ENCODE measurements at regions of chrX and their contacts with region 1.

Region 1: DNA sequence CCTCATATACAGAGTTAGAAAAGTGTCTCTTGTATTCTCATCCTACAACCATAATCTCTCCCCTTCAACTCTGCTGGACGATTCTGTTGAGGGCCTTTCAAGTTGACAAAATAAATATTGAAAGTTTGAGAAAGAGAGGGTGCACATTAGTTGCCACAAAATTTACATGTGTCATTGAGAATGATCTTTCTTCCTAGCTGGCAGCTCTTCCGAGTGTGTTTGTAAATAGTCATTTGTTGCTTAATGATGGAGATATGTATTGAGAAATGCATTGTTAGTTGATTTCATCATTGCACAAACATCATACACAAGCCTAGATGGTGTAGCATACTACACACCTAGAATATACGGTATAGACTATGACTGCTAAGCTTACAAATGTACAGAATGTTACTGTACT is 632.8 kb upstream of the AMOT start:
- DNase-seq: no peak

Region 2: GRCh38 chrX:114221445-114221844 is 748.0 kb after region 1 on chrX:
- intact Hi-C with region 1: loop called in 1 of 2 experiments (anchors 10 kb)
- DNase-seq: no peak

Region 3: DNA sequence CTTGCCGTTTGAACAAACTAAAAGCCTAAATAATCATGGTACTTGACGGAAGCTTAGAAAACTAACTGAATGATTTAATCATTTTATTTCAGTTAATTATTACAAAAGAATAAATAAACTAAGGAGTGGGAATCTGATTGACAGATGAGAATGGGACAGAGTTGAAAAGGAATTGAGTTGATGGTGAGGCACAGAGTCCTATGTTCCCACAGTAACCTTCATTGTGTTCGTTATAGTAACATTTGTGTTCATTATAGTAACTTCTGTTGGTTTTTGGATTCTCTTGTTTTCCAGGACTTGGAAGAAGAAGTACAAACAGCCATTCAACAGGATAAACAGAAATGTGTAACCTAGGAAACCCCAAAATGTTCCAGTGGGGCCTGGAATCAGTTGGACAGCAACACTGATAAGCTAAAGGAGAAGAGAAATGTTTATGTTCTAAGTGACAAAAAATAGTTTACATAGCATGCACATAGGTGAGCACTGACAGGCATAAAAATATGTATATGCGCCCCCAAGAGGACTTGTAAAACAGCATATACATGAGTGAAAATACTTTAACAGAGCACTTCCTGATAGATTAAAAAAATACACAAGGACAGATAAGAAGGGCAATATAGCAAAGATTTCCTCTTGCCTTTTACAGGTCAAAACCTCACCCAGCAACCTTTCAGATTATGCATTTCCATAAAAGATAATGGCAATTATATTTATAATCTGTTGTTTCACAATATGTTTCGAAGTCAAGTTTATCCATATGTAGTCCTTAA is 891.8 kb after region 1 on chrX:
- intact Hi-C with region 1: no loop called
- DNase-seq: no peak